ENCODE measurements at regions of chr7 and their contacts with region 1.

Region 1: GRCh38 chr7:98785929-98786571 is 83.8 kb downstream of the TMEM130 start:
- DNase-seq: no peak
- H3K4me3 ChIP-seq: no peak overlapping the region
- H3K27ac ChIP-seq: no peak overlapping the region
- H3K4me1 ChIP-seq: no peaks in the 10 kb centered on the region
- H3K27me3 ChIP-seq: no peaks in the 10 kb centered on the region
- CTCF ChIP-seq: no peak

Region 2: DNA sequence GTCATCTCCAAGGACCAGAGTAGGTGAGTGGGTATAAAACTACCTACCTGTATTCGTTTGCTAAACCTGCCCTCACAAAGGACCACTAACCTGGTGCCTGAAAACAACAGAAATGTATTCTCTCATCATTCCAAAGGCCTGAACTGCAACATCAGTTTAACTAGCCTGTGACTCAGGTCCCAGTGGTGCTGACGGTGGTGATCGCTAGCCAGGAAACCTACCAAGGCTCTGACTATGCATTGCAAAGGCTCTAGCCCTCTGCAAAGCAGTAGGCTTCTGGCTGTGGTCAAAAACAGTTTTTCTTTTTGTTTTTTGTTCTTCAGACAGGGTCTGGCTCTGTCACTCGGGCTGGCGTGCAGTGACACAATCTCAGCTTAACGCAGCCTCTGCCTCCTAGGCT is 61.5 kb before region 1 on chr7:
- CTCF ChIA-PET with region 1: no interaction called
- POLR2A ChIA-PET with region 1: no interaction called
- intact Hi-C with region 1: no loop called
- DNase-seq: no peak
- H3K4me3 ChIP-seq: no peak overlapping the region
- H3K27ac ChIP-seq: no peak overlapping the region
- H3K4me1 ChIP-seq: no peaks in the 10 kb centered on the region
- H3K27me3 ChIP-seq: peaks cover 16% of the 10 kb centered on the region
- CTCF ChIP-seq: no peak

Region 3: GRCh38 chr7:98771519-98771918 is 14.5 kb before region 1 on chr7:
- CTCF ChIA-PET with region 1: interaction called, 11 read pairs
- POLR2A ChIA-PET with region 1: no interaction called
- intact Hi-C with region 1: no loop called
- DNase-seq: peak; percentile 22
- H3K4me3 ChIP-seq: no peak overlapping the region
- H3K27ac ChIP-seq: no peak overlapping the region
- H3K4me1 ChIP-seq: no peaks in the 10 kb centered on the region
- H3K27me3 ChIP-seq: no peaks in the 10 kb centered on the region
- CTCF ChIP-seq: no peak

Region 4: DNA sequence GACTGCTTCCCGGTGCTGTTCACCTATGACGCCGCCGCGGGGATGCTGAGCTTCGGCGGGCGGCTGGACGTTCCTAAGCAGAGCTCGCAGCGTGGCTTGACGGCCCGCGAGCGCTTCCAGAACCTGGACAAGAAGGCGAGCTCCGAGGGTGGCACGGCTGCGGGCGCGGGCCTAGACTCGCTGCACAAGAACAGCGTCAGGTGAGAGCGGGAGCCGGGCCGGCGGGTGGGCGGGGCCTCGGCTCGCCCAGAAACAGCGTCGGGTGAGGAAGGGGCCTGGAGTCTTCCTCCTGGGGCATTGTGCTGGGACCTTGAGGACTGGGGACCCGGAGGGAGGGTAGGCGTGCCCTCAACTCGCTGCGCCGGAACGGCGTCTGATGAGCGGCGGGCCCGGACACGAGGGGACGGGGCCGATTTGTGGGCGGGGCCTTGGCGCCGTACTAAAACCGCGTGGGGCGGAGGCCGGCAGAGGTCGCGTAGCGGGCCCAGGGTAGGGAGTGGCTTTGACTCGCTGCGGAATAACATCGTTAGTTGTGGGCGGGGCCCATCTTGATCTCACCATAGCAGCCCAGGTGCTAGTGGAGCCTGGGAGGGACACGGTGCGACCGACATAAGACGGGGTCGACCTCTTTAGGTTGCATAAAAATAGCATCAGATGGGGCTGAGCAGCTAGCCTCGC is 606.8 kb after region 1 on chr7:
- CTCF ChIA-PET with region 1: no interaction called
- POLR2A ChIA-PET with region 1: no interaction called
- intact Hi-C with region 1: no loop called
- DNase-seq: peak; percentile 71
- H3K4me3 ChIP-seq: peak overlapping the region; percentile 63
- H3K27ac ChIP-seq: peak overlapping the region; percentile 56
- H3K4me1 ChIP-seq: peaks cover 4% of the 10 kb centered on the region
- H3K27me3 ChIP-seq: no peaks in the 10 kb centered on the region
- CTCF ChIP-seq: no peak